ENCODE measurements at regions of chr16 and their contacts with region 1.

Region 1: DNA sequence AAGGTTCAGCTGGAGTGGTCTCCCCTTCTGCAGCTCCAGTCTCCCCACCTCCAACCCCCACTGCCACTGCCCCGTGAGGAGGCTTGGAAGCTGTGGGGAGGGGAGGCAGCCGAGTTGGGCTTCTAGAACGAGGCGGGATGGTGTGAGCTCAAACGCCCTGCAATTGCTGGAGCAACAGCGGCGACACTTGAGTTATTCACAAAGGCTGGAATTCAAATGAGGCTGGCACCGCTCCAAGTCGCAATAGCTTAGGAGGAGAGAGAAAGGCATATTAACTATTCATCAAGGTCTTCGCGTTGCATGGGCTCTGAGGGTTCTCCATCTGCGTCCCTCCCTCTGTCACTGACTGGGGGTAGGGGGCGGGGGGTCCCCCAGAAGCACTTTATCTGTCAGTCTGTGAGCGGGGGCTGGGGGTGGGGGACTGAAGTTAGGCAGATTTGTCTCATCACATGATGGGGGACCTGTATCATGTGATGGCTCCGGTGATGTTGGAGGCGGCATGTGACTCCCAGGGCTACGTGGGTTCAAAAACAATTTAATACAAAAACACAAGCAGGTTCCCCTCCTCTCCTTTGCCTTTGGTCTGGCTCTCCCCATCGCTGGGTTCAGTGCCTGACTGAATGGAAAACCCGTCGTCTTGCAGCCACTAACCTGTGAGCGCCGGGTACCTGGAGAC is 70.5 kb downstream of the RBBP6 start:
- DNase-seq: peak; percentile 54 to 83 (median 72)
- H3K4me3 ChIP-seq: peak overlapping the region; percentile 45 to 86 (median 71)
- H3K27ac ChIP-seq: peak overlapping the region in 58 of 59 donors; percentile 29 to 95 (median 86)
- H3K27me3 ChIP-seq: no peaks in the 10 kb centered on the region
- CTCF ChIP-seq: no peak

Region 2: GRCh38 chr16:24539850-24540601 is 69.9 kb before region 1 on chr16:
- intact Hi-C with region 1: loop called in 1 of 2 experiments (anchors 10 kb)
- DNase-seq: peak in 3 of 10 donors; percentile 39 to 67 (median 46)
- H3K4me3 ChIP-seq: peak overlapping the region; percentile 72 to 100 (median 96)
- H3K27ac ChIP-seq: peak overlapping the region; percentile 87 to 100 (median 99)
- H3K27me3 ChIP-seq: no peaks in the 10 kb centered on the region
- CTCF ChIP-seq: no peak

Region 3: GRCh38 chr16:24670623-24671454 is 61.0 kb after region 1 on chr16:
- intact Hi-C with region 1: loop called in 1 of 2 experiments (anchors 10 kb)
- DNase-seq: peak; percentile 59 to 95 (median 90)
- H3K4me3 ChIP-seq: peak overlapping the region in 57 of 59 donors; percentile 5 to 60 (median 40)
- H3K27ac ChIP-seq: peak overlapping the region in 58 of 59 donors; percentile 46 to 98 (median 89)
- H3K27me3 ChIP-seq: no peaks in the 10 kb centered on the region
- CTCF ChIP-seq: no peak